Activated CD4-positive, alpha-beta T cell treated with anti-CD3 and anti-CD28 coated beads for 36 hours (primary cell): ENCODE measurements at regions of chr11 and their contacts with region 1.

Region 1: DNA sequence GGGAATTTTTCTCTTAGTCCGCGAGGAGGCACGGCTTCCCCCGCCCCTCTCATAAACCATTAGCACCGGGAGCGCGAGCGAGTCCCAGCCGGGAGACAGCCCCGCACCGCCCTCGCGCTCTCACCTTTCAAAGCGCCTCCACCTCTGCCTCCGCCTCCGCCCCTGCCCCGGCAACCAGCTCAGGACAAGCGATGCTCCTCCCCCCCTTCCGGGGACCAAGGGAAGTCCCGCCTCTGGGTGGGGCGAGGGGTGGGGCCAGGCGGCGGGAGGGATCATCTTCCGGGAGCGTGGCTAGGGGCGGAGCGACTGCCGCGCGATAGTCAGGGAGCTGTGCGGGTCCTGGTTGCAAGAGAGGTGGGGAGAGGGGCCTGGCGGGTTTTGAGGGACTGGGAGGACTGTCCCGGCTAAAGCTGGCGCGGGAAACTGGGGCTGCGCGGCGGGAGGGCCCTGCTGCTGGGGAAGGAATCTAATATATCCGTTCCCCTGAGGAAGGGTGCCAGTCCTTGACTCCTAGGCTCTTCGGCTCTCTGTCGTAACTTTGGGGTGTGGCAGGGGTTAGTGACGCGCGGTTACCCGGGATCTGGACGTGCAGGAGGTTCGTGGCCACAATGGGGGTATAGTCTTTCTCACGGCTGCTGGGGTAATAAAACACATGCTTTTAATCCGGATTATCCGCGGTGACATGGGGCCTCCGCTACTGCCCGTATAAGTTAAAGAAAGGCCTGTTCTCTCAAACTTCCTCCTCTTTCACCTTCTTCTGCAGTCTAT is at the starts of genes CCDC82 and JRKL:
- DNase-seq: peak; percentile 99
- ATAC-seq: peak; percentile 97
- H3K4me3 Mint-ChIP-seq: peak within 1 kb of the TSS; percentile 90
- H3K27ac Mint-ChIP-seq: peak within 1 kb of the TSS; percentile 82
- H3K4me1 Mint-ChIP-seq: peaks cover 66% of the 10 kb centered on the region
- H3K27me3 Mint-ChIP-seq: no peaks in the 10 kb centered on the region
- total RNA-seq, gene CCDC82: 32.1 to 38.3 TPM
- total RNA-seq, gene JRKL: 12.9 to 15.7 TPM

Region 2: DNA sequence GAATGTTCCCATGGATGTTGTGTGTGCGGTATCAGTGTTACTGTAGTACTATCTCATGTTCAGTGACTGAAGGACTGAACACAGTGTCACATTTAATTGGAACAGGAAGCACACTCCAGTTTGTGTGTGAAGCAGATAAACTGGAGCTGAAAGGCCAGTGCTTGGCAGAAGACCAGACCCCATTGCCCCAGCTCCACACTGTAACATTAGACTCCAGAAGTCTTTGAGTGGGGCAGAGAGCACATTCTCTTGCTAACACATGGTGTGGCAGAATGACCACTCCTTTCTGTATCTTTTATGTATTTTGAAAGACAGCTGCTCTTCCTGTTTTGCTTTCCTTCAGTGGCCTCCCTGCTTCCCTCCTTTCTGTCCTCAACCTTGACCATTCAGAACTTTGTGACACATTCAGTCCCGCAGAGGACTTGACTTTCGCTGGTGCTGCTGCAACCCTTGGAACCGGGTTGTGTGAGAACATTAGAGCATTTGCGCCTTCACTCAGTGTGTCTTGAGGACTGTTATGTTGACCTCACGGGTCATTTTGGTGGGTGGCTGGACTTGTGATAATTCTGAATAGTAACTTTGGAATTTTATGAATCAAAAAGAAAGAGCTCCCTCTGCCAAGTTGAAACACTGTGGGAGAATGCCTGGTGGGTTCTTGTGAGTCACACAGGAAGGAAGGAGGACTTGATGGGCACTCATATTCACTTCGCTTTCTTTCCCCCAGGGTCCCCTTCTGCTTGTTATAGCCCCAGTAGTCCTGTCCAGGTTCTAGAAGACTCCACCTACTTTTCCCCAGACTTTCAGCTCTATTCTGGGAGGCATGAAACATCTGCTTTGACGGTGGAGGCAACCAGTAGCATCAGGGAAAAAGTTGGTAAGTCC is 1595.4 kb before region 1 on chr11:
- CTCF ChIA-PET with region 1: no interaction called
- POLR2A ChIA-PET with region 1: no interaction called
- intact Hi-C with region 1: no loop called
- DNase-seq: no peak
- ATAC-seq: no peak
- H3K4me3 Mint-ChIP-seq: no peak overlapping the region
- H3K27ac Mint-ChIP-seq: no peak overlapping the region
- H3K4me1 Mint-ChIP-seq: no peaks in the 10 kb centered on the region
- H3K27me3 Mint-ChIP-seq: peaks cover 3% of the 10 kb centered on the region

Region 3: DNA sequence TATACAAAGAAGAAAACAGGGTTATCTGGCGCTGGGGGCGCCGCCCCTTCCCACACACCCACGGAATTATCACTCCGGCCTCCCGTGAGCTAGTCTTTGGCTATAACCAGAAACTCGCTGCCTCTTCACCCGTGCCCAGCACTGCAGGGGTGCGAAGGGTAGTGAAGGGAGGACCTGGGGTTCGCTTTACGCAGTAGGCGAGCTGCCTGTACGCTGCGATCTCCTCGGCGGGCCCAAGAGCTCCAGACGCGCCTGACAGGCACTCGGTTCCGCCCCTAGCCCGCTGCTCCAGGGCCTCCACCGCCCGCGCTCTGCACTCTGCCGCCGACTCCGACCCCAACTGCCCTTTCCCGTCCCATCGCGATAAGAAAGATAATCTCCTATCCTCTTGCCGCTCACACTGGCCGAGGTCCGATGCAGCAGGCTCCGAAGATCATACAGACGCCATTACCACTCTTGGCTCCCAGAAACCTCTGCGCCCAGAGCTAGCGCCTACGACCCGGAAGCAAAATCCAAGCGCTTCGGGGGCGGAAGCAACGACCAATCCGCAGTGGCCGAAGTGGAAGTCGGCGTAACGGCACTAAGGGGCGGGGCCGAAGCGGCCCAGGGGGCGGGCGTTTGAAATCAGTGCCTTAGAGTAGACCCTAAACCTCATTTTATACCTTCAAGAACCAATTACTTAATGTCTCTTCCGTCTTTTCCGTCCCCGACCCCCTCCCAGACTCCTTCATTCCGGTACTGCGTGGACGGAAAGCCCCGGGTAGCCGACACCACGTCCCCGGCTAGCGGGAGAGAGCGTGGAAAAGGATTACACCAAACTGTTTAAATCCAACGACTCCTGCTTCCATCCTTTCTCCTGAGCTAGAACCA is 1416.6 kb before region 1 on chr11 and contains the starts of genes CWC15 and KDM4D:
- CTCF ChIA-PET with region 1: no interaction called
- POLR2A ChIA-PET with region 1: interaction called, 6 read pairs
- intact Hi-C with region 1: loop called in 1 of 2 experiments (anchors 1 kb)
- DNase-seq: peak; percentile 97
- ATAC-seq: peak; percentile 99
- H3K4me3 Mint-ChIP-seq: peak within 1 kb of the TSS; percentile 84
- H3K27ac Mint-ChIP-seq: peak within 1 kb of the TSS; percentile 94
- H3K4me1 Mint-ChIP-seq: peaks cover 27% of the 10 kb centered on the region
- H3K27me3 Mint-ChIP-seq: no peaks in the 10 kb centered on the region
- total RNA-seq, gene CWC15: 74.7 to 85.0 TPM
- total RNA-seq, gene KDM4D: 1.5 to 1.8 TPM

Region 4: DNA sequence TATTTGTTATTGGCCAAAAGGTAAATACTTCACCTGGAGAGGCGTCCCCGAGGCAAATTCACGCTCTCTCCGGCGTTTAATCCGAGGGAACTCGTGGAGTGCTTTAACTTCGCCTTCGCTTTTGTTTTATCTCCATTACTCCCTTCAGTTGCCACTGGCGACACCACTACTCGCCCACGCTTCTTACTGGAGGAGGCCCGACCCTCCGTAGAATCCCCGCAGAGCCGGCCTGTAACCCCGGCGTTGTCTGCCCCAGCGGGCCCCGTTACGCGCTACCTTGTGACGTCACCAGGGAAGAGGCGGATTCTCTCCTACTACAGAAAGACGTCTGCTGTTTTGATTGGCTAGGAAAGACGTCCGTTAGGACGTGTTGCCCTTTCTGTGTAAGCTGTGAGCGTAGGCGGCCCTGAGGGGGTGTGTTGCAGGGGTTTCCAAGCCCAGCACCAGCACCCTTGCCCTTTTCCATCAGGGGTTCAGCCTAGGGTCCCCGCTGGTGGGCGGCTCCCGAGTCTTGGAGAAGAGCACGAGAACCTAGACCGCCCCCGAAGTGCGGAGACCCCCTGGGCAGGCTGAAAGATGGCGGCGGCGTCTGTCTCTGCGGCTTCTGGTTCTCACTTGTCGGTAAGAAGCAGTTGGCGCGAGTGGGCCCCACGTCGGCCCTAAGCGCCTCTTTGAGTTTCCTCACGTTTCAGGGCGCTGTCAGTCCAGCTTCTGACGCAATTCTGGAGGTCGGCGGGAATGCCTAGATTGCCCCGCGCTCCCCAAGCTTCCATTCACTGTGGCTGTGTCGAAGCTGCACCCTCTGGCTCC is 599.6 kb before region 1 on chr11 and contains the start of gene CEP57:
- CTCF ChIA-PET with region 1: interaction called, 6 read pairs
- POLR2A ChIA-PET with region 1: interaction called, 19 read pairs
- intact Hi-C with region 1: loop called (anchors 1 kb)
- DNase-seq: peak; percentile 98
- ATAC-seq: peak; percentile 67
- H3K4me3 Mint-ChIP-seq: peak within 1 kb of the TSS; percentile 99
- H3K27ac Mint-ChIP-seq: peak within 1 kb of the TSS; percentile 100
- H3K4me1 Mint-ChIP-seq: peaks cover 53% of the 10 kb centered on the region
- H3K27me3 Mint-ChIP-seq: no peaks in the 10 kb centered on the region
- total RNA-seq, gene CEP57: 101 to 134 TPM

Region 5: DNA sequence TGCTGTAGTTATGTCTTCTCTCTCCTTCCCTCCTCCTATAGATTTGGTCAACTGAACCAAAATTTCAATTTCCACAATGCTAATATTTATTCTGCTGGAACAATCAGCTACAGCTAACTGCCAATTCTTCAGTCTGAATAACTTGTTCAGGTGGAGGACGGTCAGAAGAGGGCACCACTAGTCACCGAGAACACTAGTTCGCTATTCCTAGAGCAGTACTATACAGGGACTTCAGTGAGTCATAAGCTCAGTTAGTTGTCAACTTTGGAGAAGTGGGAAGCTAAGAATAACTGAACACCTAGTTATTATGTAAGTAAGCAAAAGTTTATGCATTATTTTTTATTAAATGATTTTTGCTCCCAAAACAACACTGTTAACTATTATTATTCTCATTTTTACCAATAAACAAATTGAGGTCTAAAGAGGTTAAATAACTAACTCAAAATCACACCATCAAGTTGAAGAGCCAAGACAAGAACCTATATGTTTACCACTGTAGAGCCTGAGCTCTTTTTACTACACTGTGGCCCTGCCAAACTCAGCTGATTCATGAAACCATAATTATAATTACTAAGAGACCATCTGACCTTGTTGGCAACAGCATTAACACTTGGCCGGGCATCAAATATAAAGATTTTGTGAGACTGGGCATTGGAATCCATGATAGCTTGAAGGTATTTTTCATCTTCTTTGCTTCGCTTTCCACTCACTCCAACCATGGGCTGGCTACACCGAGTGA is 540.6 kb before region 1 on chr11:
- CTCF ChIA-PET with region 1: interaction called, 23 read pairs
- POLR2A ChIA-PET with region 1: no interaction called
- intact Hi-C with region 1: loop called in 1 of 2 experiments (anchors 1 kb)
- DNase-seq: peak; percentile 56
- ATAC-seq: peak; percentile 74
- H3K4me3 Mint-ChIP-seq: no peak overlapping the region
- H3K27ac Mint-ChIP-seq: no peak overlapping the region
- H3K4me1 Mint-ChIP-seq: no peaks in the 10 kb centered on the region
- H3K27me3 Mint-ChIP-seq: no peaks in the 10 kb centered on the region

Region 6: GRCh38 chr11:96012086-96012824 is 377.6 kb before region 1 on chr11:
- CTCF ChIA-PET with region 1: interaction called, 11 read pairs
- POLR2A ChIA-PET with region 1: no interaction called
- intact Hi-C with region 1: loop called (anchors 2 kb)
- DNase-seq: peak; percentile 66
- ATAC-seq: peak; percentile 71
- H3K4me3 Mint-ChIP-seq: peak overlapping the region; percentile 53
- H3K27ac Mint-ChIP-seq: peak overlapping the region; percentile 85
- H3K4me1 Mint-ChIP-seq: peaks cover 63% of the 10 kb centered on the region
- H3K27me3 Mint-ChIP-seq: no peaks in the 10 kb centered on the region

Region 7: DNA sequence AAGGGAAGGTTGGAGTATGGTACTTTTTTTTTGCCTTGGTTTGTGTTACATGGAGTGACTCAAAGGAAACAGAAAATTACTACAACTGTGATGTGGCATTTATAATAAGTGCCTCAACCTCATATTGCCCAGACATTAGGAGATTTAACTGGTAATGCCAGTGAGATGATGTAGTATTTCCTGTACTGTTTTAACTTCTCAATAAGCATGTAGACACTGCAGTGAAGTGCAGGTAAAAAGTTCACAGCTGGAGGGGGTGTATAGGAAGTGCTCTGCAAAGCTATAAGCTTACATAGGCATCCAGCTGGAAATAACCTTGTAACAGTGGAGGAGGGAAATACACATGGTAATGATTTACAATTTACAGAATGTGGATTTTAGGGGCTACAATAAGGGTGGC is 327.8 kb before region 1 on chr11:
- CTCF ChIA-PET with region 1: interaction called, 8 read pairs
- POLR2A ChIA-PET with region 1: no interaction called
- intact Hi-C with region 1: loop called in 1 of 2 experiments (anchors 2 kb)
- DNase-seq: peak; percentile 65
- ATAC-seq: peak; percentile 87
- H3K4me3 Mint-ChIP-seq: peak overlapping the region; percentile 42
- H3K27ac Mint-ChIP-seq: peak overlapping the region; percentile 94
- H3K4me1 Mint-ChIP-seq: peaks cover 81% of the 10 kb centered on the region
- H3K27me3 Mint-ChIP-seq: no peaks in the 10 kb centered on the region

Region 8: DNA sequence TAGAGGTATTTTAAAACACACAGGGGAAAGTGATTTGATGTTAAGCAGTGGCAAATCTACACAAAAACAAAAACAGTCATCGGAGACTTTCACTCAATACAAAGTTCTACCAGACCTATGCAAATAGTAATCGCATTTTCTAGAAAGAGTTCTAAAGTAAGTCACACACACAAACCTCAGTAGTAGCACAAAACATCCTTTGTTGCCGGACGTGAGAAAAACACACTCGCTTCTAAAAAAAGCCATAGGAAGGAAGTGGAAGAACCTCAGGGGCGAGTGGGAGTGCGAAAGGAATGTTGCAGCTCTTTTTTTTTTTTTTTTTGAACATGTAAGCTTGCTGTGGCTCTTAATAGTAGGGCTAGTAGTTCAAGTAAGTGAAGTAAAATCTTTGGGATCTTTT is 135.8 kb before region 1 on chr11:
- CTCF ChIA-PET with region 1: interaction called, 3 read pairs
- POLR2A ChIA-PET with region 1: no interaction called
- intact Hi-C with region 1: loop called in 1 of 2 experiments (anchors 5 kb)
- DNase-seq: peak; percentile 42
- ATAC-seq: peak; percentile 37
- H3K4me3 Mint-ChIP-seq: peak overlapping the region; percentile 53
- H3K27ac Mint-ChIP-seq: peak overlapping the region; percentile 88
- H3K4me1 Mint-ChIP-seq: peaks cover 89% of the 10 kb centered on the region
- H3K27me3 Mint-ChIP-seq: no peaks in the 10 kb centered on the region